Naive thymus-derived CD4-positive, alpha-beta T cell (primary cell): ENCODE measurements at regions of chr4 and their contacts with region 1.

Region 1: GRCh38 chr4:8403173-8403753 is 37.3 kb downstream of the ACOX3 start:
- DNase-seq: peak in 7 of 9 donors; percentile 17 to 52 (median 33)
- ATAC-seq: peak; percentile 81
- H3K4me3 ChIP-seq: no peak overlapping the region
- H3K4me3 Mint-ChIP-seq: no peak overlapping the region
- H3K27ac ChIP-seq: no peak overlapping the region
- H3K27ac Mint-ChIP-seq: no peak overlapping the region
- H3K4me1 ChIP-seq: no peaks in the 10 kb centered on the region
- H3K4me1 Mint-ChIP-seq: peaks cover 0 to 2% (median 0%) of the 10 kb centered on the region in 7 donors
- H3K27me3 ChIP-seq: no peaks in the 10 kb centered on the region
- H3K27me3 Mint-ChIP-seq: no peaks in the 10 kb centered on the region

Region 2: GRCh38 chr4:7770224-7771050 is 632.8 kb before region 1 on chr4:
- CTCF ChIA-PET with region 1: no interaction called
- POLR2A ChIA-PET with region 1: no interaction called
- intact Hi-C with region 1: no loop called
- DNase-seq: peak in 1 of 9 donors; percentile 4
- ATAC-seq: no peak
- H3K4me3 ChIP-seq: peak overlapping the region; percentile 30
- H3K4me3 Mint-ChIP-seq: peak overlapping the region; percentile 45 to 86 (median 70)
- H3K27ac ChIP-seq: peak overlapping the region; percentile 47
- H3K27ac Mint-ChIP-seq: peak overlapping the region; percentile 48 to 90 (median 79)
- H3K4me1 ChIP-seq: peaks cover 8 to 16% of the 10 kb centered on the region in 2 donors
- H3K4me1 Mint-ChIP-seq: peaks cover 8 to 37% (median 31%) of the 10 kb centered on the region in 7 donors
- H3K27me3 ChIP-seq: no peaks in the 10 kb centered on the region
- H3K27me3 Mint-ChIP-seq: no peaks in the 10 kb centered on the region

Region 3: DNA sequence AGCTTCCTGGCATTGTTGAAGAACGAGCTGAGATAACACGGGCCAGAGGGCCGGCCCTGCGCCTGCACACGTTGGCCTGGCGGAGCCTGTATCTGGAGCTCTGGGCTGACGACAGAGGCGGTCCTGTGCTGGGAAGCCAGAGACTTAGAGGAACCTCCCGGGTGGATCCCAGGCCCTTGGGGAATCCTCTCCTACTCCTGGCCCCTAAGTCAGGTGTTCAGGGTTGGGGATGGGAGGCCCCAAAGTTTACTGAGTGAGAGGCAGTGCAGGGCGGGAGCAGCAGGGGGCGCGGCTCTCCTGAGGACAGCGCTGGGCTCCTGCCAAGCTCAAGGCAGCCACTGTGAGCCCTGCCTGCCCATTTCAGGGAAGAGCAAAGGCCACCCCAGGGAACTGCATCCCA is 136.2 kb before region 1 on chr4:
- CTCF ChIA-PET with region 1: interaction called, 3 read pairs
- POLR2A ChIA-PET with region 1: no interaction called
- intact Hi-C with region 1: loop called in 1 of 2 experiments (anchors 1 kb)
- DNase-seq: peak in 1 of 9 donors; percentile 33
- ATAC-seq: peak; percentile 60
- H3K4me3 ChIP-seq: no peak overlapping the region
- H3K4me3 Mint-ChIP-seq: no peak overlapping the region
- H3K27ac ChIP-seq: no peak overlapping the region
- H3K27ac Mint-ChIP-seq: no peak overlapping the region
- H3K4me1 ChIP-seq: no peaks in the 10 kb centered on the region
- H3K4me1 Mint-ChIP-seq: peaks cover 0 to 8% (median 0%) of the 10 kb centered on the region in 7 donors
- H3K27me3 ChIP-seq: no peaks in the 10 kb centered on the region
- H3K27me3 Mint-ChIP-seq: peaks cover 18 to 31% (median 23%) of the 10 kb centered on the region in 5 donors

Region 4: GRCh38 chr4:8451440-8452197 is 48.4 kb after region 1 on chr4:
- CTCF ChIA-PET with region 1: no interaction called
- POLR2A ChIA-PET with region 1: no interaction called
- intact Hi-C with region 1: no loop called
- DNase-seq: no peak
- ATAC-seq: no peak
- H3K4me3 ChIP-seq: no peak overlapping the region
- H3K4me3 Mint-ChIP-seq: no peak overlapping the region
- H3K27ac ChIP-seq: no peak overlapping the region
- H3K27ac Mint-ChIP-seq: peak overlapping the region in 1 of 9 donors; percentile 8
- H3K4me1 ChIP-seq: no peaks in the 10 kb centered on the region
- H3K4me1 Mint-ChIP-seq: no peaks in the 10 kb centered on the region
- H3K27me3 ChIP-seq: no peaks in the 10 kb centered on the region
- H3K27me3 Mint-ChIP-seq: no peaks in the 10 kb centered on the region